PC-9 (cell line): ENCODE measurements at regions of chr14 and their contacts with region 1.

Region 1: GRCh38 chr14:54805521-54806322 is 96.9 kb downstream of the GCH1 start:
- DNase-seq: peak; percentile 66 to 81
- H3K4me3 ChIP-seq: no peak overlapping the region; the same call in 1 of the 2 replicates
- H3K27ac ChIP-seq: no peak overlapping the region
- H3K4me1 ChIP-seq: 0 out of 2 replicates have a peak, but pooled peaks cover 4% of the 10 kb centered on the region
- H3K27me3 ChIP-seq: no peaks in the 10 kb centered on the region
- CTCF ChIP-seq: peak; percentile 91

Region 2: GRCh38 chr14:54366736-54367735 is 438.7 kb before region 1 on chr14:
- CTCF ChIA-PET with region 1: no interaction called
- POLR2A ChIA-PET with region 1: no interaction called
- intact Hi-C with region 1: loop called (anchors 2 kb)
- DNase-seq: peak; percentile 49 to 55
- H3K4me3 ChIP-seq: no peak overlapping the region
- H3K27ac ChIP-seq: no peak overlapping the region
- H3K4me1 ChIP-seq: 0 out of 2 replicates have a peak, but pooled peaks cover 7% of the 10 kb centered on the region
- H3K27me3 ChIP-seq: no peaks in the 10 kb centered on the region
- CTCF ChIP-seq: peak; percentile 54

Region 3: GRCh38 chr14:54509546-54510501 is 295.9 kb before region 1 on chr14 and contains the start of gene CGRRF1:
- CTCF ChIA-PET with region 1: no interaction called
- POLR2A ChIA-PET with region 1: no interaction called
- intact Hi-C with region 1: loop called (anchors 2 kb)
- DNase-seq: peak; percentile 92 to 98
- H3K4me3 ChIP-seq: peak within 1 kb of the TSS; percentile 79
- H3K27ac ChIP-seq: no peak within 1 kb of the TSS
- H3K4me1 ChIP-seq: peaks cover 9% of the 10 kb centered on the region
- H3K27me3 ChIP-seq: no peaks in the 10 kb centered on the region
- CTCF ChIP-seq: peak; percentile 79
- total RNA-seq, gene CGRRF1: 10.3 and 11.3 TPM in 2 replicates

Region 4: GRCh38 chr14:54893151-54893760 is 87.5 kb after region 1 on chr14:
- CTCF ChIA-PET with region 1: no interaction called
- POLR2A ChIA-PET with region 1: no interaction called
- intact Hi-C with region 1: loop called (anchors 5 kb)
- DNase-seq: peak in 1 of 2 experiments; percentile 57
- H3K4me3 ChIP-seq: no peak overlapping the region
- H3K27ac ChIP-seq: no peak overlapping the region
- H3K4me1 ChIP-seq: no peaks in the 10 kb centered on the region
- H3K27me3 ChIP-seq: no peaks in the 10 kb centered on the region
- CTCF ChIP-seq: peak; percentile 86

Region 5: GRCh38 chr14:55354500-55354899 is 548.8 kb after region 1 on chr14:
- CTCF ChIA-PET with region 1: no interaction called
- POLR2A ChIA-PET with region 1: interaction called, 13 read pairs
- intact Hi-C with region 1: no loop called
- DNase-seq: peak in 1 of 2 experiments; percentile 29
- H3K4me3 ChIP-seq: no peak overlapping the region
- H3K27ac ChIP-seq: no peak overlapping the region
- H3K4me1 ChIP-seq: no peaks in the 10 kb centered on the region
- H3K27me3 ChIP-seq: no peaks in the 10 kb centered on the region
- CTCF ChIP-seq: peak; percentile 64